CD4-positive, alpha-beta T cell (primary cell): ENCODE measurements at regions of chr2 and their contacts with region 1.

Region 1: GRCh38 chr2:108983610-108984009 is 5.4 kb downstream of the EDAR start:
- DNase-seq: no peak
- ATAC-seq: no peak
- H3K4me3 ChIP-seq: no peak overlapping the region
- H3K4me3 Mint-ChIP-seq: no peak overlapping the region
- H3K27ac ChIP-seq: no peak overlapping the region
- H3K27ac Mint-ChIP-seq: peak overlapping the region; percentile 84
- H3K4me1 ChIP-seq: peaks cover 62% of the 10 kb centered on the region
- H3K4me1 Mint-ChIP-seq: peaks cover 97% of the 10 kb centered on the region
- H3K27me3 ChIP-seq: peaks cover 0 to 4% of the 10 kb centered on the region in 2 experiments
- H3K27me3 Mint-ChIP-seq: no peaks in the 10 kb centered on the region
- CTCF ChIP-seq: no peak

Region 2: GRCh38 chr2:108949316-108950239 is 34.0 kb before region 1 on chr2:
- CTCF ChIA-PET with region 1: no interaction called
- POLR2A ChIA-PET with region 1: no interaction called
- intact Hi-C with region 1: loop called in 1 of 2 experiments (anchors 2 kb)
- DNase-seq: no peak
- ATAC-seq: no peak
- H3K4me3 ChIP-seq: no peak overlapping the region
- H3K4me3 Mint-ChIP-seq: no peak overlapping the region
- H3K27ac ChIP-seq: no peak overlapping the region
- H3K27ac Mint-ChIP-seq: no peak overlapping the region
- H3K4me1 ChIP-seq: no peaks in the 10 kb centered on the region
- H3K4me1 Mint-ChIP-seq: peaks cover 26% of the 10 kb centered on the region
- H3K27me3 ChIP-seq: no peaks in the 10 kb centered on the region
- H3K27me3 Mint-ChIP-seq: no peaks in the 10 kb centered on the region
- CTCF ChIP-seq: no peak

Region 3: DNA sequence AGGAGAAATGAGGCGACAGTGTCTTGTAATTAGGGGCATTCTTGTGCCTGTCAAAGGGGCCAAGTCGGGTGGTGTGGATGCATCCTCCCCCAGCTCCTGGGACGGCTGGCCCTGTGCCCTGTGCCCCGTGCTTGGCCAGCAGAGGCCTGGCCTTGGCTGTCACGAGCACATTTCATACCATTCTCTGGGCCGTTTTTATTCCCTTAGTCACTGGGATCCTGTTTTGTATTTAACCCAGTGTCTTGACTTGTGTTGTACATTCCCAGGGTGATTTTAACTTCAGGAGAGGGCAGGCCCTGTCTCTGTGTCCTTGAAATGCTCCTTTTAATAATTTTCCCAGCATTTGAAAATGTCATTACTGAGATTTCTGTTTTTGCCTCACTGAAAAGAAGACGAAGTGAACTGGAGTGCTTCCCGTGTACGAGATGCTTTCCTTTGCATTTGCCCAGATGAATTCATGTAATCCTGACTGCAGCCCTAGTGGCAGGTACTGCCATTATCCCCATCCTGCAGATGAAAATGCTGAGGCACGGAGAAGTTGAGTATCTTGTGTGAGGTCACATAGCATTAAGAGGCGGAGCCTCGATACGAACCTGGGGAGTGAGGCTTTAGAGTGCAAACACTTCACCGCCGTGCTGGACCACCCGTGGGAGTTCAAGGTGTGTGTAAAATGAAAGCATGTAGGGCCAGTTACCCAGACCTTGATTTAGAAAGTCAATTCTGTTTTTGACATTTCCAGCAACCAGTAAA is 202.4 kb after region 1 on chr2:
- CTCF ChIA-PET with region 1: no interaction called
- POLR2A ChIA-PET with region 1: no interaction called
- intact Hi-C with region 1: no loop called
- DNase-seq: no peak
- ATAC-seq: no peak
- H3K4me3 ChIP-seq: no peak overlapping the region
- H3K4me3 Mint-ChIP-seq: no peak overlapping the region
- H3K27ac ChIP-seq: no peak overlapping the region
- H3K27ac Mint-ChIP-seq: no peak overlapping the region
- H3K4me1 ChIP-seq: no peaks in the 10 kb centered on the region
- H3K4me1 Mint-ChIP-seq: peaks cover 16% of the 10 kb centered on the region
- H3K27me3 ChIP-seq: no peaks in the 10 kb centered on the region
- H3K27me3 Mint-ChIP-seq: no peaks in the 10 kb centered on the region
- CTCF ChIP-seq: no peak